Psoas muscle (tissue), 8 donors: ENCODE measurements at regions of chr17 and their contacts with region 1.

Region 1: DNA sequence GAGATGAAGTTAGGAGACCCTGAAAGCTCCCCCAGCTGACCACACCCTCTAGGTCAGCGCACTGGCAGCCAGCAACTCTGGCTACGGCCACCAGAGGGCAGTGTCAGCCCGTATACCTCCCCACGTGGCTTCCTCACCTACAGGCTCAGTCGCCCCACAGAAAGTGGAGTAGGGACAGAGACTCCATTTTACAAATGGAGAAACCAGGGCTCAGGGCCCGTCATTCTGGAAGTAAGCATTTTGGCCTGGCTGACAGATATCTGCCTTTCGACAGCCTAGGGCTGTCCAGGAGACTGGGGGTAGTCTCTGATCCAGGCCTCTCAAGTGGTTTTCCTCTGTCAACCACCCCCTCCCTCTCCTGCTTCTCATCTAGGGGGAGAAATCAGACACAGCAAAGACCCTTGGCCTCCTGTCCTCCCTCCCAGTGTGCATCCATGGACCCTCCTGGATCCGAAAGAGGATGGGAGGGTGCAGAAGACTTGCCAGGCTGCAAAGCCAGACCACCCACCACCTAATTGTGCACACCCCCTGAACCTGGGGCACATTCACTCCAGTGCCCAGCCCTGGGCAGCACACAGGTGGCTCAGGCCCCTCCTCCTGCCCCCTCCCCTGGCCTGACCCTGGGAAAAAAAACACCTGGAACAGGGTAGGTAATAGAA is 3.8 kb upstream of the HAP1 start:
- DNase-seq: peak; percentile 75 to 89
- ATAC-seq: peak; percentile 90 to 96 (median 95)
- H3K4me3 ChIP-seq: no peak overlapping the region
- H3K27ac ChIP-seq: no peak overlapping the region
- H3K4me1 ChIP-seq: peaks cover 19% of the 10 kb centered on the region
- H3K27me3 ChIP-seq: peaks cover 0 to 45% (median 11%) of the 10 kb centered on the region in 3 donors
- CTCF ChIP-seq: peak; percentile 99

Region 2: DNA sequence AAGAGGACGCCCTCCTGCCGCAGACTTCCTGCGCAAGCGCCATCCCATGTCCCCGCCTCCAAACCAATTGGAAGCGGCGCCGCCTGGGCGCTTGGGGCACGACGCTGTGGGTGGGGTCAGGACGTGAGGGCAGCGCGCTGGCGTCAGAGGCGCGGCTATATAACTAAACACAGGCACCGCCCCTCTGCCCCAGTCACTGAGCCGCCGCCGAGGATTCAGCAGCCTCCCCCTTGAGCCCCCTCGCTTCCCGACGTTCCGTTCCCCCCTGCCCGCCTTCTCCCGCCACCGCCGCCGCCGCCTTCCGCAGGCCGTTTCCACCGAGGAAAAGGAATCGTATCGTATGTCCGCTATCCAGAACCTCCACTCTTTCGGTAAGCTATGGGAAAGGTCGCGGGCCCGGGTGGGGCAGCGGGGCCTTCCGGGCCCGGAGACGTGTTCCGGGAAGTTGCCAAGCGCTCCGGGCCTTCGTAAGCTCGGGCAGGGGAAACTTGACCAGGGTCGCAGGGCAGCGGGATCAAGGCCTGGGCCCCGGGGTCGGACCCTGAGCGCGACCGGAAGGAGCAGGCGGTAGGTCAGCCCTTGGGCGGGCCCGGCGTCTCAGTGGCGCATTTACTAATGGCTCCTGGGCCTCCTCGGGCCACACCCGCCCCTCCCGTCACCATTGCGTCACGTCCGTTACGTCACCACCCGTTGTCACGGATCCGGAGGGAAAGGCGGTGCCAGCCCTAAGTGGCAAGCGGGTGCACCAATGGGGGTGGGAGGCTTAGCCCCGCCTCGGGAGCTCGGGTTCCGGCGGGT is 49.3 kb before region 1 on chr17 and contains the start of gene EIF1:
- intact Hi-C with region 1: no loop called
- DNase-seq: peak; percentile 100
- ATAC-seq: peak; percentile 84 to 88 (median 86)
- H3K4me3 ChIP-seq: peak within 1 kb of the TSS; percentile 87
- H3K27ac ChIP-seq: peak within 1 kb of the TSS; percentile 100
- H3K4me1 ChIP-seq: peaks cover 31% of the 10 kb centered on the region
- H3K27me3 ChIP-seq: no peaks in the 10 kb centered on the region
- CTCF ChIP-seq: no peak
- total RNA-seq, gene EIF1: 1,399 to 2,094 (median 1,752) TPM

Region 3: DNA sequence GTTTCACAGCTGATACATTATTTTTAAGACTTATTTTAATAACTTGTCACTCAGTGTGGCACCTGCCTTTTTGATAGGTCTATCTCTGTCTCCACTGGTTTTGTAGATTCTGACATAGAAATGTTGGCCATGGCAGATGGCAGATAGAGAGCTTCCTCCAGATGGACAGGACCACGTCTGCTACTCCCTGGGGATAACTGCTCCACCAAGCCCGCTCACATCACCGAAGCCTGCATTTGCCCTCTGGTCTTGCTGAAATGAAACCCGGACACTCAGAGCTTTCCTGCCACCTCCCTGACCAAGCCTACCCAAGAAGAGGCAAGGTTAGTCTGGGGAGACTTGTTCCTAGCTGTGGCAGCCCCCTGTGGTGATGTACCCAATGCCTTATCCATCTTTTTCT is 12.7 kb after region 1 on chr17:
- intact Hi-C with region 1: no loop called
- DNase-seq: no peak
- ATAC-seq: no peak
- H3K4me3 ChIP-seq: no peak overlapping the region
- H3K27ac ChIP-seq: no peak overlapping the region
- H3K4me1 ChIP-seq: no peaks in the 10 kb centered on the region
- H3K27me3 ChIP-seq: no peaks in the 10 kb centered on the region
- CTCF ChIP-seq: no peak

Region 4: DNA sequence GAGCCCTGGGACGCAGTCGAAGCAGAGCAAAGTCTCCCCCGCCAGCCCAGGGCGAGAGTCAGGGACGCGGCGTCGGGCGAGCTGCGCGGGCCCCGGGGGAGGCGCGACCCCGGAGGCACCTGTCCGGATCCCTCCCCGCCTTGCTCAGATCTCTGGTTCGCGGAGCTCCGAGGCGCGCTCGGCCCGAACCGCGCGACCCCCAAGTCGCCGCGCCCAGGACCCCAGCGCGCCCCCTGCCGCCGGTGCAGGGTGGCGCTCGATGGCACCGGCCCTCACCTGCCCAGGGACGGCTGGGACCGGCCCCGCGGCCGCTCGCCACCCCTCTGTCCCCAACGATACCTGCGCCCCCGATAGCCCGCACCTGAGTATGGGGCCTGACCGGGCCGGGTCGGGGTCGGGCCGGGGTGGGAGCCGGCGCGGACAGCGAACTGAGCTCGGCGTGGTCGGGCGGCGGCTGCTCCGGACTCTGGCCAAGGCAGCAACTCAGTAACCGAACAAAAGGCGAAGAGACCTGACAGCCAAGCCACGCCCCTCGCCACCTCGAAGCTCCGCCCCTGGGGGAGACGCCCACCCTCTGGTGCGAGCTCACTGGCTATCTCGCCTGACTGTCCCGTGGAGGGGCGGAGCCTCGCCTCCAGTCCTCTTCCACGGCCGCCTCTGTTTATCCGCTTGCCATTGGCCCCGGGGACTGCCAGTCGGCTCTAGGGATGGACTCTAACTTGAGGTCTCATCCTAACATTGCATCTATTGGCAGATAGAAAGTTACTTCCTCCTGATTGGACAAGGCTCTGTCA is 48.2 kb after region 1 on chr17 and contains the start of gene JUP:
- intact Hi-C with region 1: no loop called
- DNase-seq: peak; percentile 100
- ATAC-seq: peak; percentile 92 to 99 (median 96)
- H3K4me3 ChIP-seq: peak within 1 kb of the TSS; percentile 90
- H3K27ac ChIP-seq: peak within 1 kb of the TSS; percentile 83
- H3K4me1 ChIP-seq: peaks cover 42% of the 10 kb centered on the region
- H3K27me3 ChIP-seq: no peaks in the 10 kb centered on the region
- CTCF ChIP-seq: peak; percentile 84
- total RNA-seq, gene JUP: 19.4 to 55.0 (median 43.5) TPM

Region 5: GRCh38 chr17:41801374-41802271 is 63.4 kb after region 1 on chr17:
- intact Hi-C with region 1: loop called (anchors 1 kb)
- DNase-seq: peak; percentile 79 to 91
- ATAC-seq: peak; percentile 82 to 95 (median 90)
- H3K4me3 ChIP-seq: peak overlapping the region; percentile 12
- H3K27ac ChIP-seq: no peak overlapping the region
- H3K4me1 ChIP-seq: peaks cover 6% of the 10 kb centered on the region
- H3K27me3 ChIP-seq: no peaks in the 10 kb centered on the region
- CTCF ChIP-seq: peak; percentile 98

Region 6: DNA sequence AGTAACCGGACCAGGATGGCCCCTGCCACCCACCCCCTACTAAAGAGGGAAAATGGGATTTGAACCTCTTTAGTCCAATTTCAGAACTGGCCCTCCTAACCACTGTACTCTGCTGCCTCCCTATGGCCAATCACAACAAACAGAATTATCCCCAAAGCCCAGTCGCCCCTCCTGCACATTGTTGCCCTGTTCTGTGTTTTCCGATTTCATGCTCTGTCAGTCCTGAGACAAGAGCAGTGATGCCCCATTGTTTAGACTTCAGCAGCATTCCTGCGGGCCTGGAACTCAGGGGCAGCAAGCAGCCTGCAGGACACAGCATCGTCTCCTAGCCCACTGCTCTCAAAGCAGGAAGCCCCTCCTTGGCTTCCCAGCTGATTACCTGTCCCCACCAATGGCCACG is 147.5 kb after region 1 on chr17:
- intact Hi-C with region 1: loop called in 1 of 2 experiments (anchors 10 kb)
- DNase-seq: no peak
- ATAC-seq: no peak
- H3K4me3 ChIP-seq: no peak overlapping the region
- H3K27ac ChIP-seq: no peak overlapping the region
- H3K4me1 ChIP-seq: no peaks in the 10 kb centered on the region
- H3K27me3 ChIP-seq: no peaks in the 10 kb centered on the region
- CTCF ChIP-seq: peak; percentile 16